Uterus (tissue), 4 donors: ENCODE measurements at regions of chr14 and their contacts with region 1.

Region 1: GRCh38 chr14:99518441-99519346 is 37.5 kb downstream of the CCNK start:
- DNase-seq: peak; percentile 77 to 78
- H3K4me3 ChIP-seq: no peak overlapping the region
- H3K27ac ChIP-seq: no peak overlapping the region
- H3K4me1 ChIP-seq: peaks cover 0 to 17% of the 10 kb centered on the region in 2 donors
- H3K27me3 ChIP-seq: no peaks in the 10 kb centered on the region
- CTCF ChIP-seq: peak; percentile 98 to 99 (median 98)
- POLR2A ChIP-seq: peak in 1 of 2 donors; percentile 29

Region 2: DNA sequence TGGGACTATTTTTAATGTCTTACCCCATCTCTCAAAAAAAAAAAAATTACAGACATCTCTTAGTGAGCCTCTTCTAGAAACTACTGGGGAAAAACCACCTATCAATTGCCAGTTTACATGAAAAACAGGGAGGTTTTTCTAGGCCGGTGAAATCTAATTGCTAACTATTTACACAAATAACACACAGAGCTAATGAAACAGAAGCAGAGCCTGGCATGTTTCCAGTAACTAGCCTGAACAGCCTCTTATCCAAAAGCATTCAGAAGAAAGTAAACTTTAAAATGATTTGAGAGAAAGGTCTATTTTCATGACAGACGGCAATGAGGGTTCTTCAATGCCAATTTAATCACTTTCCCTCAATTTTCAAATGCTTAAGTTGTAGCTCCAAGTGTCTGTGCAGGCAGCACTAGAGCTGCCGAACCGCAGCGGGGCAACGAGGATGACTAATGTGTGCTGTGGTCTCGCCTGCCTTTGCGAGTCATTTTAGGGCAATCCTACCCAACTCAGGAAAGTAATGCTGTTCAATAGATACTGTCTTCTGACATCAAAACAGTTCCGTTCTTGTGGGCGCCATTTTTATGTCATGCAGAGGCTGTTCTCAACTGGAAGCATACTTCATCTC is 122.7 kb before region 1 on chr14:
- intact Hi-C with region 1: no loop called
- DNase-seq: no peak
- H3K4me3 ChIP-seq: no peak overlapping the region
- H3K27ac ChIP-seq: no peak overlapping the region
- H3K4me1 ChIP-seq: no peaks in the 10 kb centered on the region
- H3K27me3 ChIP-seq: no peaks in the 10 kb centered on the region
- CTCF ChIP-seq: no peak
- POLR2A ChIP-seq: no peak

Region 3: GRCh38 chr14:99467338-99468078 is 51.2 kb before region 1 on chr14:
- intact Hi-C with region 1: no loop called
- DNase-seq: no peak
- H3K4me3 ChIP-seq: no peak overlapping the region
- H3K27ac ChIP-seq: no peak overlapping the region
- H3K4me1 ChIP-seq: no peaks in the 10 kb centered on the region
- H3K27me3 ChIP-seq: no peaks in the 10 kb centered on the region
- CTCF ChIP-seq: no peak
- POLR2A ChIP-seq: no peak

Region 4: GRCh38 chr14:99628832-99629618 is 110.3 kb after region 1 on chr14:
- intact Hi-C with region 1: loop called (anchors 2 kb)
- DNase-seq: peak; percentile 74 to 78
- H3K4me3 ChIP-seq: no peak overlapping the region
- H3K27ac ChIP-seq: no peak overlapping the region
- H3K4me1 ChIP-seq: no peaks in the 10 kb centered on the region
- H3K27me3 ChIP-seq: no peaks in the 10 kb centered on the region
- CTCF ChIP-seq: peak; percentile 96 to 98 (median 98)
- POLR2A ChIP-seq: peak in 1 of 2 donors; percentile 26